ENCODE measurements at regions of chr3 and their contacts with region 1.

Region 1: GRCh38 chr3:3200632-3201212 is 21.2 kb upstream of the CRBN start:
- DNase-seq: peak; percentile 12
- ATAC-seq: peak; percentile 86
- H3K4me3 ChIP-seq: no peak overlapping the region
- H3K27ac ChIP-seq: no peak overlapping the region
- H3K4me1 ChIP-seq: peaks cover 4% of the 10 kb centered on the region; the same call in 1 of the 2 replicates
- H3K27me3 ChIP-seq: no peaks in the 10 kb centered on the region
- CTCF ChIP-seq: peak; percentile 71 to 88 (median 75)
- EP300 ChIP-seq: no peak
- POLR2A ChIP-seq: no peak
- RAD21 ChIP-seq: peak; percentile 98

Region 2: GRCh38 chr3:3119393-3119851 is 81.3 kb before region 1 on chr3:
- CTCF ChIA-PET with region 1: no interaction called
- POLR2A ChIA-PET with region 1: no interaction called
- RAD21 ChIA-PET with region 1: no interaction called
- SMC1A ChIA-PET with region 1: no interaction called
- in situ Hi-C with region 1: no loop called
- intact Hi-C with region 1: no loop called
- DNase-seq: no peak
- ATAC-seq: peak; percentile 77
- H3K4me3 ChIP-seq: no peak overlapping the region
- H3K27ac ChIP-seq: no peak overlapping the region
- H3K4me1 ChIP-seq: peaks cover 12% of the 10 kb centered on the region; the same call in 1 of the 2 replicates
- H3K27me3 ChIP-seq: no peaks in the 10 kb centered on the region; a peak in 1 of 4 replicates
- CTCF ChIP-seq: no peak
- EP300 ChIP-seq: no peak
- POLR2A ChIP-seq: no peak
- RAD21 ChIP-seq: no peak

Region 3: DNA sequence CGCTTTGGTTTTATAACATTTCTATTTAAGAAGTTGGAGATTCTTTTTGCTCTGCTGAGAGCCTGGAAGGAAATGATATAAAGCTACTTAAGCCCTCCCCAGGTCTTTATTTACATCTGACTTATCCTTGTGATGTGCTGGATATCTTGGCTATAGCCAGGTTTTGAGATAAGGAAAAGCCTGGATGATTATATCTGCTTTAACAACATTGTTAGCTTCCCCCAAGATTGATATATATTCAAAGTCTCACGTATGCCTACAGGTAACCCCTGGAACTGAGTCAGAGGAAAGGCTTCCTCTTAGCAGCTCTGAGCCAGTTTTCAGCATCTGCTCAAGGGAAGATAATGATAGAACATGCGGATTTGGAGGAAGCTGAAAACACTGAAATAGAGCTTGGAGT is 40.3 kb after region 1 on chr3:
- CTCF ChIA-PET with region 1: interaction called, 5 read pairs
- POLR2A ChIA-PET with region 1: no interaction called
- RAD21 ChIA-PET with region 1: interaction called, 14 read pairs
- SMC1A ChIA-PET with region 1: interaction called, 3 read pairs
- in situ Hi-C with region 1: no loop called
- intact Hi-C with region 1: no loop called
- DNase-seq: no peak
- ATAC-seq: no peak
- H3K4me3 ChIP-seq: no peak overlapping the region
- H3K27ac ChIP-seq: no peak overlapping the region
- H3K4me1 ChIP-seq: no peaks in the 10 kb centered on the region
- H3K27me3 ChIP-seq: no peaks in the 10 kb centered on the region; a peak in 1 of 4 replicates
- CTCF ChIP-seq: no peak
- EP300 ChIP-seq: no peak
- POLR2A ChIP-seq: no peak
- RAD21 ChIP-seq: no peak

Region 4: DNA sequence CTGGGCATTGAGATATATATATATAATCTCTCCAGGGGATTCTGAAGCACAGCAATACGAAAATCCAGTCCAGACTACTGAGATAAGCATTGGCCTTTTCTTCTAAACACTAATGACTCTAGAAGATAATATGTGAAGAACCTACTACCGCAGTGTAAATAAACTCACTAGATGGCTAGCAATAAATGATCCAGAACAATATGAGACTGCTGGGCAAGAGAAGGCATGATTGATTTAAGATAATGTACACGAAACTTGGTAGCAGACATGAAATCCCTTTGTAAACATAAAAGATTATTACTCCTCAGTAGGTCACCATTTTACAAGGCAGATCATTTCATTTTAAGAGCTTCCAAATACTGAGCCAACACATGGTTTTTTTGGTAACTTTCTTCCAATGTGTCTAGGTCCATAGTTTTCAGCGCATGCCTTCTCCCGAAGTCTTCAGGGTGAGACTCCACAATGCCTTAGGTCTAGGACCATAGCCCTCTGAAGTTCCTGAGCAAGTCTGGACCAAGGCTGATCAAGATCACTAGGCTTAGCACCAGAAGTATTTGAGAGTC is 791.7 kb after region 1 on chr3:
- CTCF ChIA-PET with region 1: interaction called, 199 read pairs
- POLR2A ChIA-PET with region 1: interaction called, 3 read pairs
- RAD21 ChIA-PET with region 1: interaction called, 148 read pairs
- SMC1A ChIA-PET with region 1: interaction called, 129 read pairs
- in situ Hi-C with region 1: loop called (anchors 5 kb)
- intact Hi-C with region 1: no loop called
- DNase-seq: no peak
- ATAC-seq: no peak
- H3K4me3 ChIP-seq: no peak overlapping the region
- H3K27ac ChIP-seq: no peak overlapping the region
- H3K4me1 ChIP-seq: no peaks in the 10 kb centered on the region
- H3K27me3 ChIP-seq: no peaks in the 10 kb centered on the region
- CTCF ChIP-seq: no peak
- EP300 ChIP-seq: no peak
- POLR2A ChIP-seq: no peak
- RAD21 ChIP-seq: no peak

Region 5: GRCh38 chr3:4271834-4272233 is 1071.1 kb after region 1 on chr3:
- CTCF ChIA-PET with region 1: interaction called, 41 read pairs
- POLR2A ChIA-PET with region 1: no interaction called
- RAD21 ChIA-PET with region 1: interaction called, 31 read pairs
- SMC1A ChIA-PET with region 1: interaction called, 18 read pairs
- in situ Hi-C with region 1: no loop called
- intact Hi-C with region 1: loop called (anchors 5 kb)
- DNase-seq: no peak
- ATAC-seq: 0 out of 3 replicates have a peak, but pooled peaks have one; percentile 32
- H3K4me3 ChIP-seq: no peak overlapping the region
- H3K27ac ChIP-seq: no peak overlapping the region
- H3K4me1 ChIP-seq: no peaks in the 10 kb centered on the region; the same call in 1 of the 2 replicates
- H3K27me3 ChIP-seq: no peaks in the 10 kb centered on the region
- CTCF ChIP-seq: peak; percentile 27 to 43 (median 39); a peak in 5 of 6 replicates
- EP300 ChIP-seq: no peak
- POLR2A ChIP-seq: no peak
- RAD21 ChIP-seq: peak; percentile 57